Dorsolateral prefrontal cortex (tissue), 120 donors: ENCODE measurements at regions of chr18 and their contacts with region 1.

Region 1: GRCh38 chr18:27005589-27005988 is 140.1 kb upstream of the AQP4 start:
- DNase-seq: no peak
- H3K4me3 ChIP-seq: no peak overlapping the region
- H3K27ac ChIP-seq: no peak overlapping the region
- H3K27me3 ChIP-seq: no peaks in the 10 kb centered on the region
- CTCF ChIP-seq: peak in 32 of 56 donors; percentile 9 to 43 (median 24)

Region 2: DNA sequence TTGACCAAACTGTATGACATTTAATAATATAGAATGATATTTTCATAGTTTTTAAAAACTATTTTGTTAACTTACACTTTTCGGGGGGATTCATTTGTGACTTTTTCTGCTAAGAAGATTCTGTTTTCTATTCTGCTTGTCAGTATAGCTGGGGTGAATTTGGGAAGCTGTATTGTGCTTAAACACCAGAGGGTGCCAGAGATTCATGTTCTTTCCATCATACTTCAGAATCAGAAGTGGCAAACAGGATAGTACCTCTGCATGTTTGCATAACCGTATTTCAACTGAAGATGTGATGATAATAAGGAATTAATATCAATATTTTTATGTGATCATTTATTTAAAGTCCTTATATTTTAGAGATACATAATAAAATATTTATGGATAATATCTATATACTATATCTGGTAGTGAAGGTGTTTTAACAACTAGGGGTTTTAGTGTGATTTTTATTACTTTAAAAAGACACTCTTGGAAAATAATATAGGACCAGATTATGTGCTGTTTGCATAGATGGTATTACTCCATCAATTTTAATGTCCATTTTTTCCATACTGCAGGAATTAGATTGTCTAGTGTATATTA is 698.3 kb before region 1 on chr18:
- intact Hi-C with region 1: loop called in 1 of 2 experiments (anchors 10 kb)
- DNase-seq: peak in 1 of 10 donors; percentile 45
- H3K4me3 ChIP-seq: no peak overlapping the region
- H3K27ac ChIP-seq: no peak overlapping the region
- H3K27me3 ChIP-seq: no peaks in the 10 kb centered on the region
- CTCF ChIP-seq: peak; percentile 45 to 85 (median 72)

Region 3: DNA sequence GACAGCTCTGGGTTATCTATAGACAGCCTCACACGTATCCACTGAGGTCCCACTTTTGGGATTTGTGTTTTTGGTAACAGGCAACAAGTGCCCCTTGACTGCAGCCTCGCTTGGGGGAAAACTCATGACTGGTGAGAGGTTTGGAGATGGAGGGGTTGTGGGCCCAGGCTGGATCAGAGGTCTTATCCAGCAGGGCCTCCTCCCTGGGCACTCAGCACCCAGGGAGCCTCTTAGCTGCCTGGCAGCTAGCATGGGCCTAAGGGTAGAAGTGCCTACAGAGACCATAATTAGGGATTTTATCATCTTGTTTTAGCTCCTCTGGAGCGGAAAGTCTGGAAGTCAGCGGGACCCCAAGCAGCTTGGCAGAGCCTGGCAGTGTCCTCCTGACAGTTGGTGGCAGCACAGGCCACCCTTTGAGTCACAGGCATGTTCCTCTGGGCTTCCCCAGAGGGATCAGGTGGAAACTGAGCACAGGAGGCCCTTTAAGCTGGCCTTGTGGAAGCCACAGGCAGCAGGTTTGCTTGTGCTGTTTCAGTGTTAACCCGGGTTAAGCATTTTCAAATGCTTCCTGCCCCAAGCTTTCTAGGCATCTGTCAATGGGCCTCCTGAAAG is 600.3 kb before region 1 on chr18:
- intact Hi-C with region 1: loop called in 1 of 2 experiments (anchors 10 kb)
- DNase-seq: peak; percentile 33 to 76 (median 54)
- H3K4me3 ChIP-seq: no peak overlapping the region
- H3K27ac ChIP-seq: no peak overlapping the region
- H3K27me3 ChIP-seq: no peaks in the 10 kb centered on the region
- CTCF ChIP-seq: peak in 54 of 56 donors; percentile 9 to 79 (median 56)

Region 4: DNA sequence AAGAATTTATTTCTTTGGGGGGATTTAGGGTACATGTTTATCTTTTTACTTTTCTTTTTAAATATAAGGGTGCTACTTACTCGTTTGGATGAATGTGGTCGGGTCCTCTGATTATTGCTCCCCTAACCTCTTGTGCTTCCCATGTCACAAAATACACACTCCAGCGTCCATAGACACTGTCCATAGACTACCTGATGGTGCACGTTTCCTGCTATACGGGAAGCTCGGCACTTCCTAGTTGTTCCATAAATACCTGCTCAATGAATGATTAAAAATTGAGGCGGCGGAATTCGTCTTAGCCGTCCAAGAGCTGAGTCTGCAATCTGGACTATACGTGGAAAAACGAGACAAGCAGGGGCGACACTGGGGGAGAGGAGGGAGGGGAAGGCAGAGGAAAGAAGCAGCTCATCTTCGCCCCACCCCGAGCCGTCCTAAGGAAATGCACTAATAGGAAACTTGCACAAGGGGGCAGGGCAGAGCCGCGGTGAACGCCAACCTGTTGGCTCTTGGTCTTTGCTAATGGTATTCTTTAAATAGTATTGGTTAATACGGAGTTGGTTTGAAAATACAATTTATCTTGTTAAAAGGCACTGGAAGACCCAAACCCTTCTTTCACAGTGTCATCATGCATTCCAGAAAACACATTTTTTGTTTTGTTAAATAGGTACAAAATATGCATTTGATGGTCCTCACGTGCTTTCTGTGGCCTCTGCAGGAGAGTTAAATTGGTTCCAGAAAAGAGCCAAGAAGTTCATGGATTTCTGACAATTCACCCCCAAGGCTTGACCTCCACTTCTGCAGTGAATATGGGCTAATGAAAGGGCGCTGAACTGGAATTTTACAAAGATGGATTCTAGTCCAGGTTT is 384.2 kb before region 1 on chr18:
- intact Hi-C with region 1: loop called in 1 of 2 experiments (anchors 10 kb)
- DNase-seq: peak in 5 of 10 donors; percentile 39 to 67 (median 57)
- H3K4me3 ChIP-seq: no peak overlapping the region
- H3K27ac ChIP-seq: peak overlapping the region in 1 of 59 donors; percentile 33
- H3K27me3 ChIP-seq: no peaks in the 10 kb centered on the region
- CTCF ChIP-seq: peak; percentile 14 to 84 (median 65)

Region 5: GRCh38 chr18:26804519-26804918 is 201.1 kb before region 1 on chr18:
- intact Hi-C with region 1: loop called in 1 of 2 experiments (anchors 10 kb)
- DNase-seq: peak in 5 of 10 donors; percentile 14 to 47 (median 21)
- H3K4me3 ChIP-seq: no peak overlapping the region
- H3K27ac ChIP-seq: no peak overlapping the region
- H3K27me3 ChIP-seq: no peaks in the 10 kb centered on the region
- CTCF ChIP-seq: peak in 52 of 56 donors; percentile 21 to 67 (median 47)